Heart left ventricle (tissue), 16 donors: ENCODE measurements at regions of chr2 and their contacts with region 1.

Region 1: DNA sequence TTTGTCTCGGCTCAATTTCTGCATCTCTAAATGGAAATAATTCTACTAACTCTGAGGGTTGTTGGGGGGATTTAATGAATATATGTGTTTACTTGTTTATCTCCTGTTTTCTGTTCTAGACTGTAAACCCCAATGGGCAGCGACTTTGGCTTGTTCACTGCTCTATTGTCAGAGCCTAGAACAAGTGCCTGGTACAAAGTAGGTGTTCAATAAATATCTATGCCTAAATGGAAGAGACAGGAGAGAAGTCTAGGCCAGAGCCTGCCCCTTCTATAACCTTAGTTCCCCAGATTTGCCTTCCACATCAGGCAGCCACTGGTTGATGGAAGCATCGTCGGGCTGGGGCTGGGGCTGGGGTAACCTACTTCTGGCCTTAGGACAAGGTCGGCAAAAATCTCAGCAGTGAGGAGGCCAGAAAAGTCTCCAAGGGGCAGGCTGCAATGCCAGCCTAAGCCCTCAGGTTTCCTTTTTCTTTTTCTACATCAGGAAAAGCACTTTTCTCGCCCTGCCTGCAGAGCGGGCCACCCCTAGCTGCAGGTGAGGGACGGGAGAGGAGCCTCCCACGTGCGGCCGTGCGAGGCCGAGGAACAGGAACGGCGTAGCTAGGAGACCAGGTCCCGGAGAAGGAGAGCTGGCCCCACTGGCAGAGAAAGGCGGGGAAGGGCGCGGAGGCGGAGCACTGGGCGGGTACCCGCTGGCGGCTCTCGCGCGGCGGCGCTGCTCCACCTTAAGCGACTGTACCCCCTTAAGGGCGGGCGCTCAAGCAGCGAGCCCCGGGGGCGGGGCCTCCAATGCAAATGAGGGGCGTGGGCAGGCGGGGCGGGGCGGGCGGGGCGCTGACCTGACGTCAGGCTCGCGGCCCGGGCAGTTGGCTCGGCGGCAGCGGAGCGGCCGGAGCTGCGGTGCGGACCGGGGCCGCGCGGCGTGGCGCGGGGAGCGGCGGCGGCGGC is at the start of gene CNNM4:
- DNase-seq: peak; percentile 93 to 98 (median 96)
- ATAC-seq: peak; percentile 92 to 97 (median 96)
- H3K4me3 ChIP-seq: peak within 1 kb of the TSS; percentile 62 to 91 (median 75)
- H3K27ac ChIP-seq: peak within 1 kb of the TSS; percentile 33 to 89 (median 78)
- H3K4me1 ChIP-seq: peaks cover 0 to 49% (median 38%) of the 10 kb centered on the region in 12 donors
- H3K27me3 ChIP-seq: no peaks in the 10 kb centered on the region
- CTCF ChIP-seq: peak in 1 of 12 donors; percentile 11
- POLR2A ChIP-seq: no peak
- total RNA-seq, gene CNNM4: 13.1 to 47.7 (median 28.7) TPM

Region 2: GRCh38 chr2:96498023-96498431 is 262.3 kb before region 1 on chr2:
- intact Hi-C with region 1: no loop called
- DNase-seq: no peak
- ATAC-seq: peak in 1 of 4 donors; percentile 24
- H3K4me3 ChIP-seq: no peak overlapping the region
- H3K27ac ChIP-seq: no peak overlapping the region
- H3K4me1 ChIP-seq: peaks cover 0 to 22% (median 10%) of the 10 kb centered on the region in 12 donors
- H3K27me3 ChIP-seq: peaks cover 0 to 14% (median 8%) of the 10 kb centered on the region in 9 donors
- CTCF ChIP-seq: no peak
- POLR2A ChIP-seq: no peak

Region 3: GRCh38 chr2:96536445-96537065 is 223.8 kb before region 1 on chr2 and contains the start of gene ARID5A:
- intact Hi-C with region 1: loop called in 1 of 10 experiments (anchors 10 kb)
- DNase-seq: peak; percentile 95 to 98 (median 96)
- ATAC-seq: peak; percentile 69 to 82 (median 77)
- H3K4me3 ChIP-seq: peak within 1 kb of the TSS; percentile 84 to 99 (median 97)
- H3K27ac ChIP-seq: peak within 1 kb of the TSS; percentile 85 to 100 (median 98)
- H3K4me1 ChIP-seq: peaks cover 22 to 88% (median 74%) of the 10 kb centered on the region in 12 donors
- H3K27me3 ChIP-seq: no peaks in the 10 kb centered on the region
- CTCF ChIP-seq: peak in 10 of 12 donors; percentile 25 to 60 (median 42)
- POLR2A ChIP-seq: peak; percentile 99 to 100
- total RNA-seq, gene ARID5A: 13.3 to 50.2 (median 28.2) TPM

Region 4: DNA sequence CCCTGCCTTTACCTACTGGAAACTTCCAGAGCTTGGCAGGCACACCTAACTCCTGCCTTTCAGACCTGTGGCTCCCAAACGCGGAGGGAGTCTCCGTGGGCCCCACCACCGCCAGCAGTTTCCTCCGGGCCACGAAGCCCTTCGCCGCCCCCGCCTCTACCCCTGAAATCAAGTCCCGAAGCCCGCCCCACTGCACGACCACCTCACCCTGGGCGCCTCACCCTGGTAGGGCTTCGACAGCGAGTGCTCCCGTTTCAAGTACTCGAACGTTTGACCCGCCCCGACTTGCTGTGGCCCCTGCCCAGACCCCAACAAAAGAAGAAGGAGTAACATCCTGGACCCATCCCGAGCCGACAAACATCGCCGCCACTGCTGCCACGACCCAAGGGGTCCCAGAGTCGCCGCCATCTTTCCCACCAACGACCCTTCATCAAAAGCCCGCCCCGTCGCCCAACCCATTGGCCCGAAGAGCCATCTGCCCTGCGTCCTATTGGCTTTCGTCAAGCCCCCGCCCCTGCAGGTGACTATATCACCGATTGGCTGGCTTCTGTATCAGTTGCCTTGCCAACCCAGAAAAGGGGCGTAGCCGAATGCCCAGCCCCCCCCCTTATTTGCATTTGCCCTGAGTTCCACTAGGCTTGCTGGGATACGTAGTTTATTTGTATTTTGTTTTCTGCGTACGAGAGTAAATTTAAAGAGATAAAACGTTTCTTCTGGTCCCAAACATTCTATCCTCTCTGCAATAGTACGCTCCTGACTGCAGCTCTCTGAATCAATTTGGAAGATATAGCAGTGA is 20.5 kb before region 1 on chr2 and contains the start of gene LMAN2L:
- intact Hi-C with region 1: loop called in 3 of 10 experiments (anchors 1 to 2 kb)
- DNase-seq: peak; percentile 97 to 99 (median 99)
- ATAC-seq: peak; percentile 99 to 100 (median 99)
- H3K4me3 ChIP-seq: peak within 1 kb of the TSS; percentile 61 to 96 (median 79)
- H3K27ac ChIP-seq: peak within 1 kb of the TSS in 11 of 12 donors; percentile 60 to 80 (median 75)
- H3K4me1 ChIP-seq: peaks cover 0 to 40% (median 26%) of the 10 kb centered on the region in 12 donors
- H3K27me3 ChIP-seq: no peaks in the 10 kb centered on the region
- CTCF ChIP-seq: no peak
- POLR2A ChIP-seq: no peak
- total RNA-seq, gene LMAN2L: 15.1 to 27.8 (median 20.5) TPM

Region 5: DNA sequence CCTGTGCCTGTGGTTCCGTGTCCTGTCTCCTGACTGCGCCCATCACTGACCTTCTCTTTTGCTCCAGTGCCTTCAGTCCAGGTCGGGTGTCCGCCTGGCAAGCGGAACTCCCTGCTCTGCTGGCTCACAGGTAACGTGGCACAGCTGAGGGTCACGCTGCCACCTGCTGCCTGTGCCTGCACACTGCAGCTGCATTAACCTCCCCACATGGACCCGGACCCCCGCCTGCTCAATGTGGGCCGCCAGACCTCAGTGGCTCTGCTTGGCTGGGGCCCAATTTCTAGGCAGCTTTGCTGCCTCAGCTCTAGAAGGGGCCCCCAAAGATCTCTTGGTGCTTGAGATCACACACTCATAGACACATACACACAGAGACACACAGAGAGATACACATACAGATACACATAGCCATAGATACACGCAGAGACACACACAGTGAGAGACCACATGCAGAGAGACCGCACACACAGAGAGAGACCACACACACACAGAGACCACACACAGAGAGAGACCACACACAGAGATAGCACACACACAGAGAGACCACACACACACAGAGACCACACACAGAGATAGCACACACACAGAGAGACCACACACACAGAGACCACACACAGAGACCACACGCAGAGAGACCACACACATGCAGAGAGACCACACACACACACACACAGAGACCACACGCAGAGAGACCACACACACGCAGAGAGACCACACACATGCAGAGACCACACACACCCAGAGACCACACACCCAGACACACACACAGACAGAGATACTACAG is 40.9 kb after region 1 on chr2:
- intact Hi-C with region 1: loop called in 5 of 10 experiments (anchors 5 kb)
- DNase-seq: peak; percentile 58 to 86 (median 71)
- ATAC-seq: peak; percentile 76 to 93 (median 90)
- H3K4me3 ChIP-seq: no peak overlapping the region
- H3K27ac ChIP-seq: peak overlapping the region in 1 of 12 donors; percentile 63
- H3K4me1 ChIP-seq: peaks cover 0 to 7% (median 2%) of the 10 kb centered on the region in 12 donors
- H3K27me3 ChIP-seq: no peaks in the 10 kb centered on the region
- CTCF ChIP-seq: peak; percentile 64 to 86 (median 80)
- POLR2A ChIP-seq: no peak

Region 6: GRCh38 chr2:96816128-96816835 is 56.0 kb after region 1 on chr2 and contains the start of gene CNNM3:
- intact Hi-C with region 1: loop called in 1 of 10 experiments (anchors 5 kb)
- DNase-seq: peak; percentile 97 to 99 (median 98)
- ATAC-seq: peak; percentile 91 to 95 (median 94)
- H3K4me3 ChIP-seq: peak within 1 kb of the TSS; percentile 61 to 98 (median 82)
- H3K27ac ChIP-seq: peak within 1 kb of the TSS; percentile 90 to 99 (median 97)
- H3K4me1 ChIP-seq: peaks cover 3 to 70% (median 60%) of the 10 kb centered on the region in 12 donors
- H3K27me3 ChIP-seq: no peaks in the 10 kb centered on the region
- CTCF ChIP-seq: peak; percentile 56 to 91 (median 72)
- POLR2A ChIP-seq: peak in 1 of 2 donors; percentile 90
- total RNA-seq, gene CNNM3: 6.6 to 17.7 (median 10.6) TPM

Region 7: GRCh38 chr2:96839293-96839874 is 79.1 kb after region 1 on chr2:
- intact Hi-C with region 1: no loop called
- DNase-seq: peak in 2 of 5 donors; percentile 53 to 81
- ATAC-seq: peak in 1 of 4 donors; percentile 7
- H3K4me3 ChIP-seq: peak overlapping the region in 1 of 12 donors; percentile 34
- H3K27ac ChIP-seq: peak overlapping the region in 1 of 12 donors; percentile 7
- H3K4me1 ChIP-seq: peaks cover 0 to 38% (median 9%) of the 10 kb centered on the region in 12 donors
- H3K27me3 ChIP-seq: no peaks in the 10 kb centered on the region
- CTCF ChIP-seq: no peak
- POLR2A ChIP-seq: no peak